Calu3 (cell line): ENCODE measurements at regions of chr1 and their contacts with region 1.

Region 1: DNA sequence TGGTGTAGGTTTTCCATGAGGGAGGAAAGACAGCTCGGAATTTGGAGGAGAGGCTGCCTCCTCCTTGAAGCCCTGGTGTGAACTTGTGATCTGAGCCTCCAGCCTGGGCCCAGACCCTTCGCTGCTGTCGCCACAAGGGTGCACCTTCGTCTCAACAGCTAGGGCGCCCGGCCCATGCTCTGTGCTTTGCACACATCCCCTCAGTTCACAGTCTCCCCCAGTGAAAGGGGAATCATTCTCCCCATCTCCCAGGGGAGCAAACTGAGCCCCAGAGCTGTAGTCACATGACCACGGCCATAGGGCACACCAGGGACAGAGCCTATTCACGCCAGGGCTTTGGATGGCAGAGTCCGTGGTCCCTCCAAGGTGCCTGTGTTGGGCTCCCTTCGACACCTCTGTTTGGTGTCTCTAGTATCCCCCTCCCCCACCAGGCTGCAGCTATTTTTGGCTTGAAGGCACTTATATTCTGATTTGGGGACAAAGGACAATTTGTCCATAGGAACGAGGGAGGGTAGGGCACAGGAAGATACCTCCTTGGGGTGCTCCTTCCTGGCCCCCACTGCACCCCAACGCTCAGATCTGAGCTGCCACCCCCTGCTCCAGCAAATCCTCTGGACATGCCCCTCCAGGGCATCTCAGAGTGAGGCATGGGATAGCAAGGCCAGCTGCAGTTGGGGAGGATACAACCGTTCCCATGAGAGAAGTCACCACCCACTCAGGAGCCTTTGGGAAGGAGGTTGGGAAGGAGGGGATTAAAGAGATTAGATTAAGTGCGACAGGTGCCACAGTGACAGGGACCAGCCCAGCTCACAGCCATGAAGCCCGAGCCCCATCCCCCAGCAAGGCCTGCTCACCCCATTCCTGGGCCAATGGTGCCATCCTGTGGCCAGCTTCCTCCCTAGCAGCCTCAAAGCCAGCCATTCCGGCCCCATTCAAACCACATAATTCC is 15.7 kb downstream of the MATN1 start:
- DNase-seq: peak; percentile 84
- H3K4me3 Mint-ChIP-seq: no peak overlapping the region
- H3K27ac Mint-ChIP-seq: no peak overlapping the region
- H3K4me1 Mint-ChIP-seq: no peaks in the 10 kb centered on the region
- H3K27me3 Mint-ChIP-seq: no peaks in the 10 kb centered on the region
- CTCF ChIP-seq: peak; percentile 94

Region 2: GRCh38 chr1:29502911-29503840 is 1204.5 kb before region 1 on chr1:
- CTCF ChIA-PET with region 1: no interaction called
- intact Hi-C with region 1: loop called (anchors 10 kb)
- DNase-seq: no peak
- H3K4me3 Mint-ChIP-seq: no peak overlapping the region
- H3K27ac Mint-ChIP-seq: no peak overlapping the region
- H3K4me1 Mint-ChIP-seq: no peaks in the 10 kb centered on the region
- H3K27me3 Mint-ChIP-seq: peaks cover 94% of the 10 kb centered on the region
- CTCF ChIP-seq: no peak

Region 3: GRCh38 chr1:29912425-29912824 is 795.3 kb before region 1 on chr1:
- CTCF ChIA-PET with region 1: no interaction called
- intact Hi-C with region 1: loop called (anchors 5 kb)
- DNase-seq: peak; percentile 51
- H3K4me3 Mint-ChIP-seq: no peak overlapping the region
- H3K27ac Mint-ChIP-seq: no peak overlapping the region
- H3K4me1 Mint-ChIP-seq: no peaks in the 10 kb centered on the region
- H3K27me3 Mint-ChIP-seq: peaks cover 60% of the 10 kb centered on the region
- CTCF ChIP-seq: peak; percentile 29

Region 4: GRCh38 chr1:30106125-30106524 is 601.6 kb before region 1 on chr1:
- CTCF ChIA-PET with region 1: interaction called, 4 read pairs
- intact Hi-C with region 1: loop called (anchors 10 kb)
- DNase-seq: peak; percentile 74
- H3K4me3 Mint-ChIP-seq: no peak overlapping the region
- H3K27ac Mint-ChIP-seq: no peak overlapping the region
- H3K4me1 Mint-ChIP-seq: no peaks in the 10 kb centered on the region
- H3K27me3 Mint-ChIP-seq: peaks cover 100% of the 10 kb centered on the region
- CTCF ChIP-seq: peak; percentile 84

Region 5: DNA sequence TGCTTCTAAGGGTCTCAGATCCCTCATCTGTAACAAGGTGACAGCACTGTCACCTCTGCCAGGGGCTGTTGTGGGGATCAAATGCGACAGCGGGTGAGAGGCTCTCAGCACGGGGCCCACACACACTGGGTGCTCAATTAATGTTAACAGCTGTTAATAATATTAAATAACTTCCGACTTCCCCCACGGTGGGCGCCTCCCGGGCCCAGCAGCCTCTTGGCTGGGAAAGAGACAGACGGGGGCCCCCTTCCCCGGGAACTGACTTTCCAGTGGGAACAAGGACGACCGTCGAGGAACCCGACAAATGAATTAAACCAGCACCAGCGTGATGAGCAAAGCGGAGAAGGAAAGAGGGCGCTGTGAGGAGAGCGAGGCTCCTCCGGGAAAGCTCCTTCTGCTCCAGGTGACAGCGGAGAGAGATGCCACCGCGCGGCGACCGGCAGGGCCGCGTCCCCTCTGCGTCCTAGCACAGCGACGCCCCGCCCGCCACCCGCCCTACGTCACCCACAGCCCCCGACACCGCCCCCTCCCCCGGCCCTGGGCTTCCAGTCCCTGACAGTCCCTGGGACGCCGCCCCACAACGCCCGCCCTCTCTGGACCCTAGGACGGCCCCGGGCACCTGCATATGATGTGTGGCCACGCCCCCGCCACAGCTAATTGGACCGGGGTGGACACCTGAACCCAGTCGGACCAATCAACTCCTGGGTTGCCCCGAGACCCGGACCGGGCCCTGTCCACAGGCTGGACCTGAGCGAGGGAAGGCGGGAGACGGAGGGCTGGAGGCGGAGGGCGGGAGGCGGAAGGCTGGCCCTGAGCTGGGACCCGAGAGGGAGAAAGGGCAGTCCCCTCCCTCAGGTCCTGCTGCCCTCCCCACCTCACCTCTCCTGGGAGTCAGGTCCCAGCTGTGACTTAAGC is 22.5 kb before region 1 on chr1:
- CTCF ChIA-PET with region 1: no interaction called
- intact Hi-C with region 1: no loop called
- DNase-seq: peak; percentile 91
- H3K4me3 Mint-ChIP-seq: peak overlapping the region; percentile 60
- H3K27ac Mint-ChIP-seq: no peak overlapping the region
- H3K4me1 Mint-ChIP-seq: peaks cover 12% of the 10 kb centered on the region
- H3K27me3 Mint-ChIP-seq: peaks cover 95% of the 10 kb centered on the region
- CTCF ChIP-seq: no peak

Region 6: DNA sequence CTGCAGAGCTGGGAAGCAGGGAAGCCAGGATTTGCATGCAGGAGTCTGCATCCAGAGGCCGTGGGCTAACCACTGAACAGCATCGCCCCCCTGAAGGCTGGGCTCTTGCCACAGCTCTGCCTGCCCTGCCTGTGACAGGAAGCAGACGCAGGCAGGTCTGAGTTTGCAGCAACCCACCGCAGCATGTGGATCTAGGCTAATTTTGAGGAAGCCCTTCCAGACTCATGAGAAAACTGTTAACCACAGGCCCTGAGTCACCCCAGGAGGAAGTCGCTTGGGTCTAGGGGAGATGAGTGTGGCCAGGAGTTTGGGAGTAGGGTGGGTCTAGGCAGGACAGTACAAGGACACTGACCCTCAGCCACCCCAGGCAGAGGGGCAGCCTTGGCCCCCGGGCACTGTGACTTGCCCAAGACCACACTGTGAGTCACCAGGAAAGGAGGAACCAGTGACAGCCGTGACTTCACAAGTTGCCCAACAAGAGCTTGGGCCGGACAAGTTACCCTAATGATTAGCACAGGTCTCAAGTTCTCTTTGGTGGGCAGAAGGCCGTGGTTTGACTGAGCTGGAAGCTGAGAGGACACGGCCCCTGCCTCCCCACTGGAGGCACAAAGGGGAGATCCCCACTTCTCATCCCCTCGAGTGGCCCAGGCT is 49.0 kb after region 1 on chr1:
- CTCF ChIA-PET with region 1: no interaction called
- intact Hi-C with region 1: no loop called
- DNase-seq: peak; percentile 66
- H3K4me3 Mint-ChIP-seq: no peak overlapping the region
- H3K27ac Mint-ChIP-seq: peak overlapping the region; percentile 82
- H3K4me1 Mint-ChIP-seq: peaks cover 22% of the 10 kb centered on the region
- H3K27me3 Mint-ChIP-seq: no peaks in the 10 kb centered on the region
- CTCF ChIP-seq: no peak

Region 7: DNA sequence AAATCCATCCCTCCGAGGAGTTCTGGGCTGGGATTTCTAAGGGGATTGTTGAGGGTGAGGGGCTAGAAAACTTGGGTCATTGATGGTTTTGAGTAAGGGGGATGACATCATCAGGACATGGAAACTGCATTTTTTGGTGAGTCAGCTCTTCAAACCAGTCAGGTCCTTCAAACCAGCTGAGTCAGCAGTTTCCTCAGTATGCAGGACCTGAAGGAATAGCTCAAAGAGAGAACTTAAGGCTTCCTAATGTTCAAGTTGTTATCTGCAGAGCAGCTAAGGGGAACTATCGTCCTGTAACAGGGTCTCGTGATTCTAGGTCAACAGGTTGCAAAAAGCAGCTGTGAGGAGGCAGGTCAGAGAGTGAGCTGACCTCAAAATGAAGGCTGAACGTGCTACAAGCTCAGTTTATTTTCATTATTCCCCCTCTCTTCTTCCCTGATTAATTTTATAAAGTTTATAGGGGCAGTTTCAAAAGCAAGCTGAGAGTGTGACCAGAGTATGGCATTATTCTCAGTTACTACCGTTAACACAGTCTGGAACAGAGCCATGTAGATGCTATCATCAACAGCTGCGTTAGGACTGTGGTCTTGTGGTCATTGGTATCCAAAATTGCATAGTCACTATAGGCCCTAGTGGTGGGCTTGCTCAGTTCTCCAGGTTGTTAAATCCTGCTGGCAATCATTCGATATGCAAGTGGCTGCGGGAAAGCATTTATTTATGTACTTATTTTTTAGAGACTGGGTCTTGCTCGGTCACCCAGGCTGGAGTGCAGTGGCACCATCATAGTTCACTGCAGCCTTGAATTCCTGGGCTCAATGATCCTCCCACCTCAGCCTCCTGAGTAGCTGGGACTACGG is 211.6 kb after region 1 on chr1:
- CTCF ChIA-PET with region 1: no interaction called
- intact Hi-C with region 1: no loop called
- DNase-seq: no peak
- H3K4me3 Mint-ChIP-seq: no peak overlapping the region
- H3K27ac Mint-ChIP-seq: no peak overlapping the region
- H3K4me1 Mint-ChIP-seq: no peaks in the 10 kb centered on the region
- H3K27me3 Mint-ChIP-seq: no peaks in the 10 kb centered on the region
- CTCF ChIP-seq: no peak